ENCODE measurements at regions of chr2 and their contacts with region 1.

Region 1: GRCh38 chr2:43773876-43774613 is at the start of gene DYNC2LI1:
- DNase-seq: peak; percentile 81 to 95
- ATAC-seq: peak; percentile 98 to 100 (median 100)
- H3K4me3 ChIP-seq: peak within 1 kb of the TSS; percentile 85
- H3K27ac ChIP-seq: peak within 1 kb of the TSS; percentile 80
- H3K4me1 ChIP-seq: peaks cover 7% of the 10 kb centered on the region
- H3K27me3 ChIP-seq: no peaks in the 10 kb centered on the region
- CTCF ChIP-seq: no peak
- total RNA-seq, gene DYNC2LI1: 3.4 to 11.4 (median 7.9) TPM

Region 2: DNA sequence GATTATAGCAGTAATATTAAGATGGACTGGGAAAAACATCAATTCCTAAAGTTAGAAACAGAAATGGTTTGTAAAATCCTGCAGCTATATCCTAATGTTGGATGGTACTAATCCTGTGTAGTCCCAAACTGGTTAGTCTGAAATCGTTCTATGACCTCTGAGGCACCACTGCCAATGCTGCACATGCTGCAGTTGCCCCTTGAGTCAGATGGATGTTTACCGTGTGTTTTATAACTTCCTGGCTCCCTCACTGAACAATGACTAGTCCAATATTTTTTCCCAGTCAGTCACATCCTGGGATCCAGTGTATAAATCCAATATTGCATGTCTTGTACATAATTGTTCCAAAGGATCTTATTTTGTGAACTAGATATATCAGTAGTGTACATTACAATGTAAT is 1952.9 kb before region 1 on chr2:
- intact Hi-C with region 1: no loop called
- DNase-seq: no peak
- ATAC-seq: no peak
- H3K4me3 ChIP-seq: no peak overlapping the region
- H3K27ac ChIP-seq: no peak overlapping the region
- H3K4me1 ChIP-seq: no peaks in the 10 kb centered on the region
- H3K27me3 ChIP-seq: peaks cover 0 to 4% (median 0%) of the 10 kb centered on the region in 3 donors
- CTCF ChIP-seq: no peak

Region 3: DNA sequence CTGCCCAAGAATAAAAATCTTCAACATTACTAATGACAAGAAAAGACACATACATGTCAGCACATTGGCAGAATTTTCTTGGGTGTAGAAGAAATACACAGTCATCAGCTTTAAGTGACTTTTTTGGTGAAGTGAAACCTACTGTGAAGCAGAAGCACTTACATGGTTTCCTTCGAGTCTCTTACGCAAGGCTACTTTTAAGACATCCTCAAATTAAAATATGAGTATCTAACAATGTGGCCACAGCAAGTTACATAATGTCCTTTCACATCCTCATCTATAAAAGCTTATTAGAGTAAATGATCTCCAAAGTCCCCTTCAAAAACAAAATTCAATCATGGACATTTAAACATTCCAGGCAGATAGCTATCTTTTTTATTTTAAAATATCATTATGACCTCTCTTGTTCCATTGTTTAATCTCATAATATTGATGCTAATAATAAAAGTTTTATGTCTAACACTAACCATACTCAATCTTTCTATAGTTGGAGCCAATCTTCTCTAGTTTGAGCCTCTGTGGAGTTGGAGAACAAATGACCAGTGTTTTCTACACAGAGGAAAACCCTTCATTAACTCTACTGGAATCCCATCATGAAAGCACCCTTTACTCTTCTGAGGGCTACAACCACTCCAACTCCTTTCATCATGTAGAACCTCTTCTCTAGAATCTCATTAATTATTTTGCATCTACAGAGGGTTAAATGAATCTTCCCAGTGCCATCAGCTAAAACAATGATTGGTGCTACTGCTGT is 365.5 kb before region 1 on chr2:
- intact Hi-C with region 1: no loop called
- DNase-seq: no peak
- ATAC-seq: no peak
- H3K4me3 ChIP-seq: no peak overlapping the region
- H3K27ac ChIP-seq: no peak overlapping the region
- H3K4me1 ChIP-seq: peaks cover 45% of the 10 kb centered on the region
- H3K27me3 ChIP-seq: no peaks in the 10 kb centered on the region
- CTCF ChIP-seq: no peak

Region 4: GRCh38 chr2:43611987-43612894 is 161.8 kb before region 1 on chr2:
- intact Hi-C with region 1: loop called in 1 of 2 experiments (anchors 5 kb)
- DNase-seq: peak; percentile 55 to 62
- ATAC-seq: peak; percentile 81 to 94 (median 92)
- H3K4me3 ChIP-seq: no peak overlapping the region
- H3K27ac ChIP-seq: no peak overlapping the region
- H3K4me1 ChIP-seq: no peaks in the 10 kb centered on the region
- H3K27me3 ChIP-seq: peaks cover 0 to 1% (median 0%) of the 10 kb centered on the region in 3 donors
- CTCF ChIP-seq: peak; percentile 70

Measured in psoas muscle (tissue), 8 donors.